Transverse colon (tissue), 4 donors: ENCODE measurements at regions of chr10 and their contacts with region 1.

Region 1: GRCh38 chr10:89553064-89553734 is 17.8 kb upstream of the SLC16A12 start:
- DNase-seq: no peak
- H3K4me3 ChIP-seq: no peak overlapping the region
- H3K27ac ChIP-seq: no peak overlapping the region
- H3K4me1 ChIP-seq: peaks cover 0 to 6% (median 0%) of the 10 kb centered on the region in 4 donors
- H3K27me3 ChIP-seq: no peaks in the 10 kb centered on the region
- CTCF ChIP-seq: no peak
- EP300 ChIP-seq: no peak
- POLR2A ChIP-seq: no peak

Region 2: DNA sequence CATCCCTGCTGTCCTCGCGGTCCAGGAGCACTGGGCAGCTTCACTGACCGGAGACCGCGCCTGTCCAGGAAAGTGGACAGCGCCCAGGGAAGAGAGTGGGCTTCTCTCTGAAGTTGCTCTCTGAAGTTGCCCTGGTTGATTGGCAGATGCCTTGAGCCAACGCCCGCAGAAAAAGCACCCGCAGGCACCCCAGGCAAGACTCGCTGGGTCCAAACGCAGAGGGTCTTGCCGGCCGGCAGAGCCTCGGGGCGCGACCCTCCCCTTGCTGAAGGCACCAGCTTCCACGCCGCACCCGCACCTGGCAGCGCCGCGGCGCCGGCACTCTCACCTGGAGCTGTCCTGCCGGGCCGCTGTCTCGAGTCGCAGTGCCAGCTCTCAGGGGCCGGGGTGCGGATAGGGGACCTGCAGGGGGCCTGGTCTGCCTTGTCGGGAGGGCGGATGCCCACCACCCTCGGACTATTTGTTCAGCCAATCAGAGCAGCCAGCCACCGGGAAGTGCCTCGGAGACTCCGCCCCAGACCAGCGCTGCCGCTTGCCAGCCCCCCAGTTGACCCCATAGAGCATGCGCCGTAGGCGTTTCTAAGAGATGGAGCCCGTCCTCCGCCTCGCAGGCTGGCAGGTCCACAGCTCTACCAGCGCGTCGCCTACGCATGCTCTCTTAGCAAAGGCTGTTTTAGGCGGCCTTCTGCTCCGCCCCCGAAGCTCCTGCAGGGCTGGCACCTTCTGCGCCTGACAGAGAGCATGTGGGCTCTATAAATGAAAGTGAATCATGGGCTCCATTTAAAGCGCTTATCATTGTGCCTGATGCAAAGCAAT is 301.6 kb before region 1 on chr10 and contains the start of gene LIPA:
- in situ Hi-C with region 1: loop called in 1 of 4 experiments (anchors 10 kb)
- intact Hi-C with region 1: no loop called
- DNase-seq: peak; percentile 94
- H3K4me3 ChIP-seq: peak within 1 kb of the TSS; percentile 52 to 85 (median 78)
- H3K27ac ChIP-seq: peak within 1 kb of the TSS; percentile 77 to 84 (median 82)
- H3K4me1 ChIP-seq: peaks cover 0 to 13% (median 5%) of the 10 kb centered on the region in 4 donors
- H3K27me3 ChIP-seq: no peaks in the 10 kb centered on the region
- CTCF ChIP-seq: no peak
- EP300 ChIP-seq: no peak
- POLR2A ChIP-seq: peak; percentile 61
- total RNA-seq, gene LIPA: 3.6 to 23.8 (median 12.1) TPM

Region 3: DNA sequence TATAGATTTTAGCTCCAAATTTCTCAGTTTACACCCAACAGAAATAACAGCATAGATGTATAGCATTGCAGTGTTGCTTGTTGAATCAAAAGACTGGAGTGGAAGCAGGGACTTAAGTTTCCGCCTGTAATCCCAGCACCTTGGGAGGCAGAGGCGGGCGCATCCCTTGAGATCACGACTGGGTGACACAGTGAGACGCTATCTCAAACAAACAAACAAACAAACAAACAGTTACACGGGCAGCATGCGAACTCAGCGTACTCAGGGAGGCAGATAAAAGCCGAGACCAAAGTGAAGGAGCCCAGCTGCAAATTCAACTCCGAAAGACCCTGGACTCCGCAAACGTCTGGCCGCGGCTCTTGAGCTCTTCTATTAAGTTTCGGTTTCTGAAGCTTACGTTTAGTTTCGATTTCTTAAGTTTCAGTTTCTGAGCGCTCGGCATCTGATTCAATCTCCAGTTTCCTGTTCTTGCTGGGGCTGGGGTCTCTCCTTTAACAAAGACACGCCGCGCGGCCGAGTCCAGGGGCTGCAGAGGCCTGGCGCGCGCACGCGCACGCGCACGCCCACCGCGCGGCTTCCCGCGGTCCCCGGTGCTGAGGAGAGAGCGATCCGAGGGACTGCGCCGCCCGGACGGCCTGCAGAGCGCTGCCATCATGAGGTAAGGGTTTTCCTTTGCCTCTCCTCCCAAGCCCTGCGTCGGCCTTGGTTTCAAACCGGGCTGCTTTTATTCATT is 138.9 kb before region 1 on chr10 and contains the start of gene IFIT5:
- in situ Hi-C with region 1: no loop called
- intact Hi-C with region 1: no loop called
- DNase-seq: peak; percentile 68
- H3K4me3 ChIP-seq: peak within 1 kb of the TSS; percentile 63 to 96 (median 80)
- H3K27ac ChIP-seq: peak within 1 kb of the TSS; percentile 93 to 99 (median 95)
- H3K4me1 ChIP-seq: peaks cover 6 to 41% (median 15%) of the 10 kb centered on the region in 4 donors
- H3K27me3 ChIP-seq: no peaks in the 10 kb centered on the region
- CTCF ChIP-seq: no peak
- EP300 ChIP-seq: no peak
- POLR2A ChIP-seq: no peak
- total RNA-seq, gene IFIT5: 1.5 to 12.5 (median 11.2) TPM

Region 4: DNA sequence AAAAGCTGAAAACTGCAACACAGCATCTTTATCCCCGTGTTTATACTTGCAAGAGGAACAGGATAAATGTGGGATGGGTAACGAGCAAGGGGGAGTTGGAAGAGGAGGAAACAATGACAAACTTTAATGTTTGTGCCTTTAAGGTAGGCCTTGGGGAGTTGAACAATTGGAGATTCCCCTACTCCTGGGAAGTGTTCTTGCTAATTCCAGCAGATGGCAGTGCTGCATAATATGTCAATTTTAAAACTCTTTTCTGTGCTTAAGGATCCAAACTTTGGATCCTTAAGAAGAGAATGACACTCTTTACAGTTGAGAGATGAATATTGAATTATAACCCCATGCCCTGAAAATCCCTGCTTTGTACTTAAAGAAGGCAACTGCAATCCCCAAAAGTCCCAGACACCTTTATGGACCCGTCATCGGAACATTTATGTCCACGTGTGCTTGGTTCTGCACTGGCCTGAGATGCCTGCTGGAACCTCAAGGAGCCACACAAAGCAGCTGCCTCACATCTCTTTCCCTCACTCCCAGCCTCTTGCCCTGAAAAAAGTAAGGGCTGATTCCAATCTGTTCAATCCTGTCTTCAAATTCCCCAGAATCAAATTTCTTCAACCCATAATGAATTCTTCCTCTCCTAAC is 126.8 kb before region 1 on chr10:
- in situ Hi-C with region 1: loop called in 2 of 4 experiments (anchors 10 kb)
- intact Hi-C with region 1: no loop called
- DNase-seq: no peak
- H3K4me3 ChIP-seq: no peak overlapping the region
- H3K27ac ChIP-seq: no peak overlapping the region
- H3K4me1 ChIP-seq: no peaks in the 10 kb centered on the region
- H3K27me3 ChIP-seq: no peaks in the 10 kb centered on the region
- CTCF ChIP-seq: peak; percentile 65 to 78 (median 72)
- EP300 ChIP-seq: no peak
- POLR2A ChIP-seq: no peak

Region 5: DNA sequence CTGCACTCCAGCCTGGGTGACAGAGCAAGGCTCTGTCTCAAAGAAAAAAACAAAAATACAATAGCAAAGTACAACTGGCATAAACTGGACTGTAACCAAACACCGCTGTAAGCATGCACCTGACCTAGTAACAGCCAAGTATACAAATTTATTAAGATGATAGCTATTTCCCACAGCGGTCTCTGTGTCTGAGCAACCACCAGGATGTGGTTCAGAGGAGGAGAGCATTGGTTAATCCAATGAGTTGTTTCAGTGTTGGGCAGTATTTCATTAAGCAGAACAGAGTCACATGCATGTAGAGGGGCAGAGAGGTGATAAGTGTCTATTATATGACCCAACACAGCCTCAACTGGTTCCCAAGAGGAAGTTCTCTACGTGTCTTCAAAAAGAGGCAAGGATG is 21.8 kb before region 1 on chr10:
- in situ Hi-C with region 1: no loop called
- intact Hi-C with region 1: loop called (anchors 1 kb)
- DNase-seq: no peak
- H3K4me3 ChIP-seq: no peak overlapping the region
- H3K27ac ChIP-seq: no peak overlapping the region
- H3K4me1 ChIP-seq: peaks cover 0 to 15% (median 8%) of the 10 kb centered on the region in 4 donors
- H3K27me3 ChIP-seq: peaks cover 53% of the 10 kb centered on the region
- CTCF ChIP-seq: no peak
- EP300 ChIP-seq: no peak
- POLR2A ChIP-seq: no peak

Region 6: GRCh38 chr10:89589101-89589720 is 36.0 kb after region 1 on chr10:
- in situ Hi-C with region 1: no loop called
- intact Hi-C with region 1: no loop called
- DNase-seq: no peak
- H3K4me3 ChIP-seq: no peak overlapping the region
- H3K27ac ChIP-seq: no peak overlapping the region
- H3K4me1 ChIP-seq: no peaks in the 10 kb centered on the region
- H3K27me3 ChIP-seq: no peaks in the 10 kb centered on the region
- CTCF ChIP-seq: no peak
- EP300 ChIP-seq: no peak
- POLR2A ChIP-seq: no peak